Mammary epithelial cell (primary cell): ENCODE measurements at regions of chr6 and their contacts with region 1.

Region 1: DNA sequence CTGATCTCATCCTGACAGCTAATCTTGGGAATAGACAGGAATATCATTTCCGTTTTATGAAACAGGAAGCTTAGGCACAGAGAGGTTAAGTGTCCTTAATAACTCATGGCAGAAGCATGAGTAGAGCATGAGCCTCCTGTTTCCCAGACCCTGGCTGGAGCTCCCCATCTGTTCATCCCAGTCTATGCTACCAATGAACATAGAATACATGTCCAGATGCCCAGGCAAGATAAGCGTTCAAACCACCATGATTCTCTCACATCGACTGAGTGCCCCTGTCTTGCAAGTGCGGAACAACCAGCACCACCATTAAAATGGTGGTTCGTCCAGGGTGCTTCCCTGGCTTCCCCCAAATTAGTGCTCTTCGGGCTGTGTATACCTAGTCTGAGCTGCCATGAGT is 217.1 kb downstream of the FARS2 start:
- DNase-seq: no peak
- H3K4me3 ChIP-seq: no peak overlapping the region
- H3K27ac ChIP-seq: no peak overlapping the region
- H3K4me1 ChIP-seq: no peaks in the 10 kb centered on the region
- H3K27me3 ChIP-seq: no peaks in the 10 kb centered on the region
- CTCF ChIP-seq: no peak

Region 2: DNA sequence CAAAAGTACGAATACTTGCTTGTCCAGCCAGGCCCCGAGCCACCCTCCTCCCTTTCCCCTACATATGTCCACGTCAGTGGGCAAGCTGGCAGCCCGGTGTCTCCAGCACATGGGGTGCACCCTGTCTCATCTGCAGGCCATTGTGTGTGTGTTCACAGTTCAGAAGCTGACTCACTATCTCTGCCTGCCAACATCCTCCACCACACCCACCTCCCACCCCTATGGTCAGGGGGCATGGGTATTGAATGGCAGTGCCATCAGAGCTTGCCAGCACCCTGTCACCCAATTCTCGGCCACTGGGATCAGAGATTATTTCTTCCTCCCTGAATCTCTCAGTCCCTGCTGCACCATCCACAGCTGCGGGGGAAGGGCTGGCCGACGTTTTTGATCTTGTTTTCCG is 21.3 kb before region 1 on chr6:
- CTCF ChIA-PET with region 1: interaction called, 14 read pairs
- dilution Hi-C with region 1: no loop called
- in situ Hi-C with region 1: no loop called
- intact Hi-C with region 1: no loop called
- DNase-seq: peak; percentile 66
- H3K4me3 ChIP-seq: no peak overlapping the region
- H3K27ac ChIP-seq: peak overlapping the region; percentile 16
- H3K4me1 ChIP-seq: peaks cover 32% of the 10 kb centered on the region
- H3K27me3 ChIP-seq: no peaks in the 10 kb centered on the region
- CTCF ChIP-seq: no peak

Region 3: GRCh38 chr6:5511954-5512353 is 33.6 kb after region 1 on chr6:
- CTCF ChIA-PET with region 1: no interaction called
- dilution Hi-C with region 1: no loop called
- in situ Hi-C with region 1: no loop called
- intact Hi-C with region 1: no loop called
- DNase-seq: no peak
- H3K4me3 ChIP-seq: no peak overlapping the region
- H3K27ac ChIP-seq: no peak overlapping the region
- H3K4me1 ChIP-seq: no peaks in the 10 kb centered on the region
- H3K27me3 ChIP-seq: no peaks in the 10 kb centered on the region
- CTCF ChIP-seq: no peak